PC-9 (cell line): ENCODE measurements at regions of chr1 and their contacts with region 1.

Region 1: GRCh38 chr1:9317591-9318417 is 25.1 kb downstream of the SPSB1 start:
- DNase-seq: peak in 1 of 2 experiments; percentile 66
- H3K4me3 ChIP-seq: no peak overlapping the region
- H3K27ac ChIP-seq: no peak overlapping the region
- H3K4me1 ChIP-seq: no peaks in the 10 kb centered on the region
- H3K27me3 ChIP-seq: no peaks in the 10 kb centered on the region
- CTCF ChIP-seq: no peak

Region 2: DNA sequence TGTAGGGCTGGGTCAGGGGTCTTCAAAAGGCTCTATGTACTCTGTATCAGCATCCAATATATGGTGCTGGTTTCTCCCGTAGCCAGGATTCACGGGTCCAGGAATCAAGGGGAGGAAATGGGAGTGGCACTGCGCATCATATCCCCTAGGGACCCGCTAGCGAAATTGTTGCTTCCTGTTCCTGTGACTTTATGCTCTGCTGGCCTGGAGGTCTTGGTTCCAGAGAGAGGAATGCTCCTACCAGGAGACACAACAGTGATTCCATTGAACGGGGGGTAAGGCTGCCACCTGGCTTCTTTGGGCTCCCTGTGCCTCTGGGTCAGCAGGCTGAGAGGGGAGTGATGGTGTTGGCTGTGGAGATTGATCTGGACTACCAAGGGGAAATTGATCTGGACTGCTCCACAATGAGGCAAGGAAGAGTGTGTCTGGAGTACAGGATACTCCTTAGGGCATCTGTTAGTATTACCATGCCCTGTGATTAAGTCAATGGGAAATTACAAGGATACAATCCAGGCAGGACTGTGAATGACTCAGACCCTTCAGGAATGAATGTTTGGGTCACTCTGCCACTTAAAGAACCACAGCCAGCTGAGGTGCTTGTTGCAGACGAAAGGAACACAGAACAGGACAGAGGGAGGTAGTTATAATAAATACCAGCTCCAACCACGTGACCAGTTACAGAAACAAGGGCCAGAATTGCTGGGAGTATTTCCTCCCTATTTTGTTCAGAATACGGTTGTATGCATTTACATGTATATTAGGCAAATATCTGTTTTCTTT is 14.9 kb before region 1 on chr1:
- CTCF ChIA-PET with region 1: interaction called, 3 read pairs
- POLR2A ChIA-PET with region 1: interaction called, 3 read pairs
- intact Hi-C with region 1: loop called (anchors 1 kb)
- DNase-seq: peak; percentile 60 to 83
- H3K4me3 ChIP-seq: no peak overlapping the region; the same call in 1 of the 2 replicates
- H3K27ac ChIP-seq: peak overlapping the region; percentile 82
- H3K4me1 ChIP-seq: peaks cover 51% of the 10 kb centered on the region
- H3K27me3 ChIP-seq: no peaks in the 10 kb centered on the region
- CTCF ChIP-seq: no peak

Region 3: DNA sequence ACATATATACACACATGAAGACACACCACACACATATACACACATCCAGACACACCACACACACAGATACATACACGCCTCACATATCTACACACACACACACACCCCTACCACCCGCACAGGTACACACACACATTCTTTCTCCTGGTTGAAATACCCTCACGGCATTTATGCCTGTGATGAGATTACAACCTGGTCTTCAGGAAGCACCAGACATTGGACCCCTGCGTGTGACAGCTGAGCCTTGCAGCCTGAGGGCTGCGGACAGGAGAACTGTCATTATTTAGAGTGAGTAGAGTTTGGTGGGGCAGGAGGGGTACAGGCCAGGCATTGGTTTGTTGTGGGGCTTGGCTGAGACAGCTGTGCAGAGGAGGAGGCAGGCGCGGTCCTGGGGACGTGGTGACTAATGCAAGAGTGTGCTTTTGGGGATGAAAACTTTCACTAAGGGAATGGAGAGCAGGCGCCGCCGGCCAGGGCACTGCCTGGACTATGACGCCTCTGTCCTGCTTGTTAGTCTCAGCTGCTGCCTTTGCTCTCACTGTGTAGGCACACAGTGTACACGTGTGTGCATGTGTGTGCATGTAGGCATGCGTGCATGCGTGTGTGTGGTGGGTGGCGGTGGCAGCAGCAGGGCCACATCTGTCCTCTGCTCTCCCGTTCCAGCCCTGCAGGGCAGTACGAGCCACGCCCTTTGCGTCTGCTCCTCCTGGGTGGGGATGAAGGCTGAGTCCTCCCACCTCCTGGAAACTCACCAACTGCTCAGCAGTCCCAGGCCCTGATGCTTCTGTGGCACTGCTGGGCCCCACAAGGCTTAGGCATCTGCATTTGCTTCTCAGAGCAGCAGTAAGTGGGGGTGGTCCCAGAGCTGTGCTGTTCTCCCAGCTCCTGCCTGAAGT is 32.5 kb after region 1 on chr1:
- CTCF ChIA-PET with region 1: no interaction called
- POLR2A ChIA-PET with region 1: no interaction called
- intact Hi-C with region 1: loop called (anchors 1 kb)
- DNase-seq: peak in 1 of 2 experiments; percentile 17
- H3K4me3 ChIP-seq: no peak overlapping the region
- H3K27ac ChIP-seq: no peak overlapping the region
- H3K4me1 ChIP-seq: peaks cover 26% of the 10 kb centered on the region
- H3K27me3 ChIP-seq: no peaks in the 10 kb centered on the region
- CTCF ChIP-seq: no peak

Region 4: GRCh38 chr1:9376886-9377333 is 59.1 kb after region 1 on chr1:
- CTCF ChIA-PET with region 1: no interaction called
- POLR2A ChIA-PET with region 1: no interaction called
- intact Hi-C with region 1: no loop called
- DNase-seq: no peak
- H3K4me3 ChIP-seq: no peak overlapping the region
- H3K27ac ChIP-seq: no peak overlapping the region
- H3K4me1 ChIP-seq: no peaks in the 10 kb centered on the region
- H3K27me3 ChIP-seq: no peaks in the 10 kb centered on the region
- CTCF ChIP-seq: no peak